HepG2 (cell line): ENCODE measurements at regions of chr1 and their contacts with region 1.

Region 1: DNA sequence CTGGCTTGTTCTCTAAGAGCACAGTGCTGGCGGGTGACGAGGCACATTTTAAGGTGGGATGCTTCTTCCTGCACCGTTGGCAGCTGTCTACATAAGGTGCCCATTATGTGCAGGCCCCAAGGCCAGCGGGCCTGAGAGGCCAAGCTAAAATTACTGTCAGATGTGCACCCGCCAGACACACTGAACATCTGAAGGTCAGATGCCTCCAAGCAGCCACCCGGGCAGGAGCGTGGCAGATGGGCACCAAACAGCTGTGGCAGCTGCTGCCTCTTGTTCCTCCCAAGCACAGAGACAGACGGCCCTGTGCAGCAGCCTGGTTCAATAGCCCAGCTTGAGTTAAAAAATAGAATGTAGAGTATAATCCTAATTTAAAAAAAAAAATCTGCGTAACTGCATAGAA is 211.9 kb upstream of the EDN2 start:
- DNase-seq: no peak
- ATAC-seq: no peak
- H3K4me3 ChIP-seq: no peak overlapping the region
- H3K27ac ChIP-seq: no peak overlapping the region
- H3K4me1 ChIP-seq: no peaks in the 10 kb centered on the region
- H3K27me3 ChIP-seq: peaks cover 0 to 11% of the 10 kb centered on the region in 2 experiments; a peak in 3 of 5 replicates
- CTCF ChIP-seq: no peak
- EP300 ChIP-seq: no peak
- POLR2A ChIP-seq: no peak
- RAD21 ChIP-seq: no peak

Region 2: GRCh38 chr1:41708332-41708731 is 12.0 kb after region 1 on chr1:
- CTCF ChIA-PET with region 1: no interaction called
- POLR2A ChIA-PET with region 1: no interaction called
- in situ Hi-C with region 1: no loop called
- intact Hi-C with region 1: loop called (anchors 1 kb)
- DNase-seq: no peak
- ATAC-seq: no peak
- H3K4me3 ChIP-seq: no peak overlapping the region
- H3K27ac ChIP-seq: no peak overlapping the region
- H3K4me1 ChIP-seq: no peaks in the 10 kb centered on the region
- H3K27me3 ChIP-seq: peaks cover 7 to 43% of the 10 kb centered on the region in 2 experiments; a peak in 3 of 5 replicates
- CTCF ChIP-seq: no peak
- EP300 ChIP-seq: no peak
- POLR2A ChIP-seq: no peak
- RAD21 ChIP-seq: no peak